SK-N-SH (cell line): ENCODE measurements at regions of chr4 and their contacts with region 1.

Region 1: GRCh38 chr4:7929118-7929951 is 10.3 kb downstream of the AFAP1 start:
- DNase-seq: peak; percentile 66
- H3K4me3 ChIP-seq: no peak overlapping the region
- H3K27ac ChIP-seq: peak overlapping the region; percentile 23 to 66; a peak in 3 of 4 replicates
- H3K4me1 ChIP-seq: peaks cover 21 to 26% of the 10 kb centered on the region in 2 experiments; a peak in 3 of 4 replicates
- H3K27me3 ChIP-seq: no peaks in the 10 kb centered on the region
- CTCF ChIP-seq: peak; percentile 50
- EP300 ChIP-seq: no peak
- RAD21 ChIP-seq: peak; percentile 88

Region 2: GRCh38 chr4:7423801-7424552 is 505.4 kb before region 1 on chr4:
- CTCF ChIA-PET with region 1: no interaction called
- POLR2A ChIA-PET with region 1: no interaction called
- DNase-seq: peak; percentile 24
- H3K4me3 ChIP-seq: no peak overlapping the region
- H3K27ac ChIP-seq: no peak overlapping the region
- H3K4me1 ChIP-seq: no peaks in the 10 kb centered on the region; a peak in 1 of 4 replicates
- H3K27me3 ChIP-seq: no peaks in the 10 kb centered on the region
- CTCF ChIP-seq: no peak
- EP300 ChIP-seq: no peak
- RAD21 ChIP-seq: no peak

Region 3: GRCh38 chr4:7770224-7771050 is 158.9 kb before region 1 on chr4:
- CTCF ChIA-PET with region 1: interaction called, 30 read pairs
- POLR2A ChIA-PET with region 1: no interaction called
- DNase-seq: peak; percentile 73
- H3K4me3 ChIP-seq: no peak overlapping the region
- H3K27ac ChIP-seq: peak overlapping the region in 1 of 2 experiments; percentile 25; a peak in 1 of 4 replicates
- H3K4me1 ChIP-seq: peaks cover 0 to 27% of the 10 kb centered on the region in 2 experiments; a peak in 1 of 4 replicates
- H3K27me3 ChIP-seq: no peaks in the 10 kb centered on the region
- CTCF ChIP-seq: peak; percentile 63
- EP300 ChIP-seq: no peak
- RAD21 ChIP-seq: peak; percentile 69

Region 4: GRCh38 chr4:7818399-7818911 is 110.9 kb before region 1 on chr4:
- CTCF ChIA-PET with region 1: interaction called, 15 read pairs
- POLR2A ChIA-PET with region 1: no interaction called
- DNase-seq: peak; percentile 79
- H3K4me3 ChIP-seq: no peak overlapping the region
- H3K27ac ChIP-seq: peak overlapping the region; percentile 97 to 99
- H3K4me1 ChIP-seq: peaks cover 29 to 76% of the 10 kb centered on the region in 2 experiments
- H3K27me3 ChIP-seq: no peaks in the 10 kb centered on the region
- CTCF ChIP-seq: no peak
- EP300 ChIP-seq: peak in 1 of 2 experiments; percentile 92; a peak in 2 of 4 replicates
- RAD21 ChIP-seq: peak; percentile 36

Region 5: GRCh38 chr4:7892212-7893019 is 36.9 kb before region 1 on chr4:
- CTCF ChIA-PET with region 1: interaction called, 26 read pairs
- POLR2A ChIA-PET with region 1: interaction called, 3 read pairs
- DNase-seq: peak; percentile 62
- H3K4me3 ChIP-seq: 0 out of 4 replicates have a peak overlapping the region, but pooled peaks of 1 of the 2 experiments have one; percentile 30
- H3K27ac ChIP-seq: peak overlapping the region; percentile 97 to 98
- H3K4me1 ChIP-seq: peaks cover 58 to 59% of the 10 kb centered on the region in 2 experiments
- H3K27me3 ChIP-seq: no peaks in the 10 kb centered on the region
- CTCF ChIP-seq: no peak
- EP300 ChIP-seq: peak in 1 of 2 experiments; percentile 93; a peak in 2 of 4 replicates
- RAD21 ChIP-seq: no peak; the same call in 1 of the 2 replicates

Region 6: GRCh38 chr4:7918981-7919380 is 10.4 kb before region 1 on chr4:
- CTCF ChIA-PET with region 1: interaction called, 19 read pairs
- POLR2A ChIA-PET with region 1: interaction called, 3 read pairs
- DNase-seq: no peak
- H3K4me3 ChIP-seq: no peak overlapping the region
- H3K27ac ChIP-seq: peak overlapping the region in 1 of 2 experiments; percentile 64; a peak in 1 of 4 replicates
- H3K4me1 ChIP-seq: peaks cover 7 to 27% of the 10 kb centered on the region in 2 experiments; a peak in 3 of 4 replicates
- H3K27me3 ChIP-seq: no peaks in the 10 kb centered on the region
- CTCF ChIP-seq: no peak
- EP300 ChIP-seq: no peak
- RAD21 ChIP-seq: no peak